CD4-positive, alpha-beta memory T cell (primary cell): ENCODE measurements at regions of chr10 and their contacts with region 1.

Region 1: GRCh38 chr10:21516242-21517131 is 9.0 kb downstream of the SKIDA1 start:
- DNase-seq: peak; percentile 46 to 64 (median 55)
- H3K4me3 ChIP-seq: peak overlapping the region in 1 of 2 donors; percentile 39
- H3K4me3 Mint-ChIP-seq: peak overlapping the region; percentile 68 to 89 (median 76)
- H3K27ac ChIP-seq: no peak overlapping the region
- H3K27ac Mint-ChIP-seq: peak overlapping the region in 1 of 7 donors; percentile 77
- H3K4me1 ChIP-seq: peaks cover 37% of the 10 kb centered on the region
- H3K4me1 Mint-ChIP-seq: peaks cover 23 to 50% (median 32%) of the 10 kb centered on the region in 4 donors
- H3K27me3 ChIP-seq: peaks cover 76% of the 10 kb centered on the region
- H3K27me3 Mint-ChIP-seq: peaks cover 63 to 76% of the 10 kb centered on the region in 2 donors

Region 2: GRCh38 chr10:21265621-21266020 is 250.9 kb before region 1 on chr10:
- CTCF ChIA-PET with region 1: no interaction called
- POLR2A ChIA-PET with region 1: no interaction called
- intact Hi-C with region 1: no loop called
- DNase-seq: no peak
- H3K4me3 ChIP-seq: no peak overlapping the region
- H3K4me3 Mint-ChIP-seq: no peak overlapping the region
- H3K27ac ChIP-seq: no peak overlapping the region
- H3K27ac Mint-ChIP-seq: no peak overlapping the region
- H3K4me1 ChIP-seq: no peaks in the 10 kb centered on the region
- H3K4me1 Mint-ChIP-seq: peaks cover 0 to 1% (median 0%) of the 10 kb centered on the region in 4 donors
- H3K27me3 ChIP-seq: no peaks in the 10 kb centered on the region
- H3K27me3 Mint-ChIP-seq: no peaks in the 10 kb centered on the region

Region 3: GRCh38 chr10:21533467-21534279 is 17.2 kb after region 1 on chr10 and contains the start of gene MLLT10:
- CTCF ChIA-PET with region 1: interaction called, 3 read pairs
- POLR2A ChIA-PET with region 1: interaction called, 19 read pairs
- intact Hi-C with region 1: loop called (anchors 1 kb)
- DNase-seq: peak; percentile 93 to 96 (median 95)
- H3K4me3 ChIP-seq: peak within 1 kb of the TSS; percentile 69 to 88
- H3K4me3 Mint-ChIP-seq: peak within 1 kb of the TSS; percentile 92 to 99 (median 95)
- H3K27ac ChIP-seq: peak within 1 kb of the TSS; percentile 63
- H3K27ac Mint-ChIP-seq: peak within 1 kb of the TSS; percentile 85 to 98 (median 95)
- H3K4me1 ChIP-seq: peaks cover 19% of the 10 kb centered on the region
- H3K4me1 Mint-ChIP-seq: peaks cover 10 to 33% (median 21%) of the 10 kb centered on the region in 4 donors
- H3K27me3 ChIP-seq: no peaks in the 10 kb centered on the region
- H3K27me3 Mint-ChIP-seq: no peaks in the 10 kb centered on the region
- total RNA-seq, gene MLLT10: 64.6 to 73.4 TPM